HepG2 (cell line): ENCODE measurements at regions of chr5 and their contacts with region 1.

Region 1: DNA sequence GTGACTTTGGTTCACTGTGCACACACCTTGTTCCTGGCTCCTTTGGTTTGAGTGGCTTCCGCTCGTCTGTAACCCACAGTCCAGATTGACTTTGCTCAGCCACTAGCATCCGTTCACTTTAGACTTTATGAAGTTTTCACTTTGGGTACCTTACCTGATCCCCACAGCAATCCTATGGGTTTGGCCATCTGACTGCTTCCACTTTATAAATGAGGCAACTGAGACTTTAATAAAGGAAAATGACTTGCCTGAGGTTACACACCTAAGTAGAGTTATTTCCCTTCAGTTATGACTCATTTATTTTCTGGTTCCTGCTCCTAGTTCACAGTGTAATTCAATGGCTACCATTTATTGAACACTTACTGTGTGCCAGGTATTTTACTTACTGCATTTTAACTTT is 94.2 kb upstream of the SAP30L start:
- DNase-seq: no peak
- ATAC-seq: no peak
- H3K4me3 ChIP-seq: no peak overlapping the region
- H3K27ac ChIP-seq: no peak overlapping the region
- H3K4me1 ChIP-seq: peaks cover 61% of the 10 kb centered on the region
- H3K27me3 ChIP-seq: no peaks in the 10 kb centered on the region
- CTCF ChIP-seq: no peak
- EP300 ChIP-seq: no peak
- POLR2A ChIP-seq: no peak
- RAD21 ChIP-seq: no peak

Region 2: DNA sequence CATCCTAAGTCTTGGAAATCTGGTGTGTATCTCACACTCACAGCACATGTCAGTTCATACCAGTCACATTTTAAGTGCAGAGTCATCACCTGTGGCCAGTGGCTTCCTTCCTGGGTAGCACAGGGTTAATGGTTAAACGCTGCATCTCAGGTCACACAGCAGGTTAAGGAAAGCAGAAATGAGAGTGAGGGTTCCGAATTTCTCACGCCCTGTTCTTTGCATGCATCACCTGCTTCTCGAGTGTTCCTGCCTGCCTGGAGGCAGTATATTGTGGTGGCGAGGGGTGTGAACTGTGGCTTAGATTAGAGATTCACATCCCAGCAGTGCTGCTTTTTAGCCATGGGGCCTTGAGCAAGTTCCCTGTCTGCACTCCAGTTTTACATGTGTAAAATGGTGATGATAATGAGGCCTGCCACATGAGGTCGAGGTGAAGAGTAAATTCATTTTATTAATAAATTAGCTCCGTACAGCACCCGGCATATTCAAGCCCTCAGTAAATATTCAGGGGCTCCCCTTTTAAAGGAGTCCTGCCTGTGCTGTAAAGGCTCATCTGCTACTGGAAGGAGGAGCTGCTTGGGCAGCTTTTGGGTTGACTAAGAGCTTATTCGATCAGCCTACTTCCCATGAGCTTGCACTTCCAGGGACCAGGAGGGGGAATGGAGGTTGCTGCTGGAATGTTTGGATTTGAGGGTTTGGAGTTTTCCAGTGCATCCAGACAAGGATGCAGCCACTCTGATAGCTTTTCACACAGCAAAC is 33.1 kb after region 1 on chr5:
- CTCF ChIA-PET with region 1: no interaction called
- POLR2A ChIA-PET with region 1: no interaction called
- in situ Hi-C with region 1: no loop called
- intact Hi-C with region 1: loop called (anchors 5 kb)
- DNase-seq: no peak
- ATAC-seq: no peak
- H3K4me3 ChIP-seq: no peak overlapping the region
- H3K27ac ChIP-seq: no peak overlapping the region
- H3K4me1 ChIP-seq: peaks cover 45% of the 10 kb centered on the region
- H3K27me3 ChIP-seq: no peaks in the 10 kb centered on the region
- CTCF ChIP-seq: no peak
- EP300 ChIP-seq: no peak
- POLR2A ChIP-seq: no peak
- RAD21 ChIP-seq: no peak